ENCODE measurements at regions of chr9 and their contacts with region 1.

Region 1: GRCh38 chr9:136051517-136052432 is 43.3 kb downstream of the NACC2 start:
- DNase-seq: peak; percentile 64
- ATAC-seq: peak; percentile 74
- H3K4me3 ChIP-seq: peak overlapping the region; percentile 53 to 60
- H3K27ac ChIP-seq: peak overlapping the region; percentile 94
- H3K4me1 ChIP-seq: peaks cover 64% of the 10 kb centered on the region
- H3K27me3 ChIP-seq: no peaks in the 10 kb centered on the region
- CTCF ChIP-seq: no peak

Region 2: DNA sequence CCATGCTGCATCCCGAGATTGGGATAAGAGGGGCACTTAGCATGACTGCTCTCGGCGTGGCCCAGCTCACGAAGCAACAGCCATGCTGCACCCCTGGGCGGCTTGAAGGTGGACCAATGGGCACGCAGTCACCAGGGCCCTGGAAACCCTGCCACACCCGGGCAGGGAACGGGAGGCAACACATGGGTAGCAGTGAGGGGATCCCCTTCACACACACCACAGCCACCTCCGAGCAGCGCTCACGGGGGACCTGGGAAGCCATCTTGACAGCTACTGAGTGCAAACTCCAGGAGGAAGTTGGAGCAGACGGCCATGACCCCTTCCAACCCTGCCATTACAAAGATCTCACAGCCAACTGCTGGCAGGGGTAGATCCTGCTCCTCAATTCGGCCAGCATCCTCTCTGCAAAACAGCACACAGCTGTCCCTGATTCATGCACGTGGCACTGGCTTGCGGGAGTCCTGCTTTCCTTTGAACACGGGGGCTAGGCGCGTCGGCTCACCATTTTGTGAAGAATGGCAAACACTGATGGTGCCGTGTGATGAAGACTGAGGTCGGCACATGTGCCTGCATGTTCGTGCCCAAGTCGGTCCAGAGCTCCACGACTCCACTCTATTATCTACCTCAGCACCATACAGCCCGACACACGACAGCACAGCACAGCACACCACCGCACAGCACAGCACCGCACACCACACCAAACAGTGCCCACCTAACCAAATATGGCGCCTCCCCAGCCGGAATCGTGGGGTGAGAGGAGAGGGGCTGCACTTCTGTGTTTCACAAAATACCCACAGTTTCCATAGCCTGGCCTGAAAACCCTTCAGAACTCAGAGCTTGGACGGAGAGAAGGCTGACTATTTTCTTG is 95.6 kb before region 1 on chr9:
- CTCF ChIA-PET with region 1: no interaction called
- POLR2A ChIA-PET with region 1: interaction called, 10 read pairs
- in situ Hi-C with region 1: no loop called
- intact Hi-C with region 1: no loop called
- DNase-seq: no peak
- ATAC-seq: no peak
- H3K4me3 ChIP-seq: no peak overlapping the region
- H3K27ac ChIP-seq: no peak overlapping the region
- H3K4me1 ChIP-seq: no peaks in the 10 kb centered on the region
- H3K27me3 ChIP-seq: no peaks in the 10 kb centered on the region
- CTCF ChIP-seq: no peak

Region 3: GRCh38 chr9:135997090-135998015 is 54.4 kb before region 1 on chr9:
- CTCF ChIA-PET with region 1: no interaction called
- POLR2A ChIA-PET with region 1: no interaction called
- in situ Hi-C with region 1: no loop called
- intact Hi-C with region 1: loop called (anchors 2 kb)
- DNase-seq: no peak
- ATAC-seq: no peak
- H3K4me3 ChIP-seq: no peak overlapping the region
- H3K27ac ChIP-seq: no peak overlapping the region
- H3K4me1 ChIP-seq: peaks cover 10% of the 10 kb centered on the region
- H3K27me3 ChIP-seq: no peaks in the 10 kb centered on the region
- CTCF ChIP-seq: no peak

Region 4: GRCh38 chr9:136093995-136094881 is 42.5 kb after region 1 on chr9:
- CTCF ChIA-PET with region 1: interaction called, 3 read pairs
- POLR2A ChIA-PET with region 1: interaction called, 12 read pairs
- in situ Hi-C with region 1: no loop called
- intact Hi-C with region 1: no loop called
- DNase-seq: no peak
- ATAC-seq: peak; percentile 58
- H3K4me3 ChIP-seq: peak overlapping the region; percentile 62 to 67
- H3K27ac ChIP-seq: peak overlapping the region; percentile 88
- H3K4me1 ChIP-seq: peaks cover 41% of the 10 kb centered on the region
- H3K27me3 ChIP-seq: no peaks in the 10 kb centered on the region
- CTCF ChIP-seq: no peak

Region 5: DNA sequence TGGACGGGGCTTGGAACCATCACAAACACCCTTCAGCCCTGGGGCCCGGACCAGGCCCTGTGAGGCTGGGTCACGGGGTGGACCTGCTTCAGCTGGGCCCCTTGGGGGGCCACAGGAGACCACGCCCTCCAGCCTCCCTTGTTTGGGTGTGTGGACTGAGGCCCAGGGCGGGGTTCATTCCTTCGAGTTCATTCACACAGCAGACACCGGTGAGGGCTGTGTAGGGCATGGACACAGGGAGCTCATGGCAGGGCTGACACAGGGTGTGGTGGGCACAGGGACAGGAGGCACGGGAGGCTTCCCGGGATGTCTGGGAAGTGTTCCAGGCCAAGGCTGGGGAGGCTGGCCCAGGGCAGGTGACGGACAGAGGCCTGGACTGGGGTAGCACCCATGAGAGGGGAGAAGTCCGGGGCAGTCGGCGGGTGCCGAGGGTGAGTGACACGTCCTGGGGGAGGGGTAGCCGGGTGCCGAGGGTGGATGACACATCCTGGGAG is 302.9 kb after region 1 on chr9:
- CTCF ChIA-PET with region 1: no interaction called
- POLR2A ChIA-PET with region 1: no interaction called
- in situ Hi-C with region 1: no loop called
- intact Hi-C with region 1: no loop called
- DNase-seq: no peak
- ATAC-seq: peak; percentile 59
- H3K4me3 ChIP-seq: peak overlapping the region in 1 of 2 experiments; percentile 14; a peak in 1 of 4 replicates
- H3K27ac ChIP-seq: peak overlapping the region; percentile 51; the same call in 1 of the 2 replicates
- H3K4me1 ChIP-seq: peaks cover 19% of the 10 kb centered on the region
- H3K27me3 ChIP-seq: no peaks in the 10 kb centered on the region
- CTCF ChIP-seq: no peak

Measured in Panc1 (cell line).